Activated CD4-positive, alpha-beta memory T cell treated with anti-CD3 and anti-CD28 coated beads for 36 hours (primary cell): ENCODE measurements at regions of chr1 and their contacts with region 1.

Region 1: GRCh38 chr1:32286763-32287162 is 5.1 kb upstream of the HDAC1 start:
- DNase-seq: no peak
- H3K4me3 Mint-ChIP-seq: no peak overlapping the region
- H3K27ac Mint-ChIP-seq: no peak overlapping the region
- H3K4me1 Mint-ChIP-seq: peaks cover 15% of the 10 kb centered on the region
- H3K27me3 Mint-ChIP-seq: no peaks in the 10 kb centered on the region

Region 2: GRCh38 chr1:31762726-31763670 is 523.8 kb before region 1 on chr1:
- CTCF ChIA-PET with region 1: interaction called, 10 read pairs
- POLR2A ChIA-PET with region 1: no interaction called
- intact Hi-C with region 1: no loop called
- DNase-seq: peak; percentile 82
- H3K4me3 Mint-ChIP-seq: peak overlapping the region; percentile 64
- H3K27ac Mint-ChIP-seq: no peak overlapping the region
- H3K4me1 Mint-ChIP-seq: peaks cover 20% of the 10 kb centered on the region
- H3K27me3 Mint-ChIP-seq: peaks cover 9% of the 10 kb centered on the region